ENCODE measurements at regions of chr6 and their contacts with region 1.

Region 1: GRCh38 chr6:31079656-31080261 is 32.6 kb downstream of the C6orf15 start:
- DNase-seq: peak; percentile 61 to 78 (median 78)
- H3K4me3 ChIP-seq: peak overlapping the region in 4 of 7 experiments; percentile 42 to 78 (median 65)
- H3K27ac ChIP-seq: no peak overlapping the region
- H3K4me1 ChIP-seq: peaks cover 0 to 5% (median 4%) of the 10 kb centered on the region in 4 experiments
- H3K27me3 ChIP-seq: no peaks in the 10 kb centered on the region

Region 2: DNA sequence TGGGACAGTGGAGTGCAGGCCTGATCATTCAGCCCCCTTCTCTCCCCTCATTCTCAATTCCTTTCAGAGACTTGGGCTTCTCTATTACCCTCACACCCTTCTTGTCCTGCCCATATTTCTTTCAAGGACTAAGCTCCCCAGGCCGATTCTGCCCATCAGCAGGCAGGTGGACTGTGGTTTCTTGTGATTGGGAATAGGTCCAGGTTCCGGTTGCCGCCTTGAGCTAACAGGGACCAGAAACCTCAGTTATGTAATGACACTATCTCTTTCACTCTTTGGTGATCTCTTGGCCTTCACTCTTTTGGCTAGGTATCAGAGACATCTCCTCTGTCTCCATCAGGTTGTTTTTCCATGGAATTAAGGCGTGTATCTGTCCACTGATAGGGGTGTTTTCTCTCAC is 132.5 kb before region 1 on chr6:
- CTCF ChIA-PET with region 1: no interaction called
- POLR2A ChIA-PET with region 1: no interaction called
- DNase-seq: no peak
- H3K4me3 ChIP-seq: no peak overlapping the region
- H3K27ac ChIP-seq: no peak overlapping the region
- H3K4me1 ChIP-seq: no peaks in the 10 kb centered on the region
- H3K27me3 ChIP-seq: peaks cover 7 to 54% (median 24%) of the 10 kb centered on the region in 5 experiments

Region 3: DNA sequence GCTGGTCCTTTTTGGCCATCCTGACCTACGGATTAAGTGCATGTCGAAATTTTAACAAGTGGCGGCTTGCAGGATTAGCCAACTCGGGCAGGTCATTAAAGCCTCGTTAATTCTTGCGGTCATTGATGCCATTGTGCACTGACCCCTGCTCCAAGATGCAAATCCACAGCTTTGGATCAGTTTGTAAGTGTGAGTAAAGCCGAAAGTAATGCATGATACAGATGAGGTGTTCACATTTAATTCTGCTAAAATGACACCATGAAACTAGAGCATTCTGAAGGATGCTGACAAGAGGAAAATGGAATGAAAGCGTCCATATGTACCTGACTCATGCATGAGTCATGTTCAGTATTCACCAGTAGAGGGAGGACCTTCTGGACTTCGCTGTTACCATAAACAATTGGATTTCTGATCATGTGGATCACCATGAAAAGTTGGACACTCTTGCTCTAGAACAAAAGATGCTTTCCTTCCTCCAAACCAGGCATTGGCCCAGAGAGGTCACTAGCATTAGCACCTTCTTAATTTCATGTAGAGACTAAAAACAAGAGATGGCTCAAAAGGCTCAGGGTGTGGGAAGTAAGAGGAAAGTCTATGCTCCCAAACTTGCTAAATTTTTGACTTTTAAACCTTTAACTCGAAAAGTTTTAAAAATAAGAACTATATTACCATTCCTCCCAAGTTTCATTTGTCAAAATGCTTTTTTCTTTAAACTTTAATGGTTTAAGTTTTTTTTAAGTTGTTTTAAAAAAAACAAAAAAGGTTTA is 21.4 kb before region 1 on chr6:
- CTCF ChIA-PET with region 1: interaction called, 12 read pairs
- POLR2A ChIA-PET with region 1: no interaction called
- DNase-seq: peak; percentile 43 to 64 (median 62)
- H3K4me3 ChIP-seq: no peak overlapping the region
- H3K27ac ChIP-seq: no peak overlapping the region
- H3K4me1 ChIP-seq: peaks cover 0 to 12% (median 8%) of the 10 kb centered on the region in 4 experiments
- H3K27me3 ChIP-seq: peaks cover 0 to 4% (median 0%) of the 10 kb centered on the region in 5 experiments

Region 4: GRCh38 chr6:31068669-31069340 is 11.0 kb before region 1 on chr6:
- CTCF ChIA-PET with region 1: interaction called, 21 read pairs
- POLR2A ChIA-PET with region 1: no interaction called
- DNase-seq: peak; percentile 70 to 85 (median 82)
- H3K4me3 ChIP-seq: no peak overlapping the region
- H3K27ac ChIP-seq: no peak overlapping the region
- H3K4me1 ChIP-seq: no peaks in the 10 kb centered on the region
- H3K27me3 ChIP-seq: peaks cover 0 to 2% (median 0%) of the 10 kb centered on the region in 5 experiments

Region 5: GRCh38 chr6:31094389-31094881 is 14.7 kb after region 1 on chr6:
- CTCF ChIA-PET with region 1: interaction called, 10 read pairs
- POLR2A ChIA-PET with region 1: interaction called, 3 read pairs
- DNase-seq: peak; percentile 80 to 96 (median 94)
- H3K4me3 ChIP-seq: peak overlapping the region in 4 of 7 experiments; percentile 26 to 47 (median 36)
- H3K27ac ChIP-seq: peak overlapping the region; percentile 4 to 64
- H3K4me1 ChIP-seq: peaks cover 13 to 61% (median 47%) of the 10 kb centered on the region in 4 experiments
- H3K27me3 ChIP-seq: no peaks in the 10 kb centered on the region

Region 6: DNA sequence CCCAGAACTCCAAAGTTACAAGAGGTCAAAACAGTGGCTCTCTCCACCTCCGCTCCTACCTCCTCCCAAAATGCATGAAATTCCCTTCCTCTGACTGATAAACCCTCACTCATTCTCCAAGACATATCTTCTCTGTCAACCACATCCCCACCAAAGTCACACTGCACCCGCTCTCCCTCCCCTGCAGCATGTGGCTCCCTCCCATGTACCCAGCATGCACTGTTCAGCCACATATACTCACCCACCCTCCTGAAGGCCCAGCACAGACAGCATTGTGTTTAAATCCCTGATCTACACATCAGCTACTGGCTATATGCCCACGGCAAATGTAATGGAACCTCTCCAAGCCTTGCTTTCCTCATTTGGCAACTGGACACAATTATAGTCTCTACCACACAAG is 96.2 kb after region 1 on chr6:
- CTCF ChIA-PET with region 1: no interaction called
- POLR2A ChIA-PET with region 1: no interaction called
- DNase-seq: no peak
- H3K4me3 ChIP-seq: no peak overlapping the region
- H3K27ac ChIP-seq: no peak overlapping the region
- H3K4me1 ChIP-seq: peaks cover 0 to 10% (median 3%) of the 10 kb centered on the region in 4 experiments
- H3K27me3 ChIP-seq: no peaks in the 10 kb centered on the region

Measured in common myeloid progenitor, CD34-positive (primary cell).